Thyroid gland (tissue), 4 donors: ENCODE measurements at regions of chr7 and their contacts with region 1.

Region 1: DNA sequence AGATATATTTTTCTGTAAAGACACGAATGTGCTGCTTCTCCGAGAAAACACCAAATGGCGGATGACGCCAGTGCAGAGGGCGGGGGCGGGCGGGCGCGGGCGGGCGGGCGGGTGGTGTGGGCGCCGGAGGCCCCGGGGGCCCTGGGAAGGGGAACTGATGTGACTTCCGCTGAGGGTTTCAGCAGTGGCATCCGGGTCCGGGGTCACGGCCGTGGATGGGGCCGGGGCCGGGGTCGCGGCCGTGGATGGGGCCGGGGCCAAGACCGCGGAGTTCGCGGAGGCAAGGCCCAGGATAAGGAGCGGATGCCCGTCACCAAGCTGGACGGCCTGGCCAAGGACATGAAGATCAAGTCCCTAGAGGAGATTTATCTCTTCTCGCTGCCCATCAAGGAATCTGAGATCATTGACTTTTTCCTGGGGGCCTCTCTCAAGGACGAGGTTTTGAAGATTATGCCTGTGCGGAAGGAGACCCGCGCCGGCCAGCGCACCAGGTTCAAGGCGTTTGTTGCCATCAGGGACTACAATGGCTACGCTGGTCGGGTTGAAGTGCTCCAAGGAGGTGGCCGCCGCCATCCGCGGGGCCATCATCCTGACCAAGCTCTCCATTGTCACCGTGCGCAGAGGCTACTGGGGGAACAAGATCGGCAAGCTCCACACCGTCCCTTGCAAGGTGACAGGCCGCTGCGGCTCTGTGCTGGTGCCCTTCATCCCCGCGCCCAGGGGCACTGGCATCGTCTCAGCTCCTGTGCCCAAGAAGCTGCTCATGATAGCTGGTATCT is 20.3 kb upstream of the IGF2BP3 start:
- DNase-seq: peak; percentile 38 to 39
- H3K4me3 ChIP-seq: peak overlapping the region in 2 of 3 donors; percentile 36 to 39
- H3K27ac ChIP-seq: no peak overlapping the region
- H3K4me1 ChIP-seq: no peaks in the 10 kb centered on the region
- H3K27me3 ChIP-seq: no peaks in the 10 kb centered on the region
- CTCF ChIP-seq: no peak
- POLR2A ChIP-seq: no peak

Region 2: DNA sequence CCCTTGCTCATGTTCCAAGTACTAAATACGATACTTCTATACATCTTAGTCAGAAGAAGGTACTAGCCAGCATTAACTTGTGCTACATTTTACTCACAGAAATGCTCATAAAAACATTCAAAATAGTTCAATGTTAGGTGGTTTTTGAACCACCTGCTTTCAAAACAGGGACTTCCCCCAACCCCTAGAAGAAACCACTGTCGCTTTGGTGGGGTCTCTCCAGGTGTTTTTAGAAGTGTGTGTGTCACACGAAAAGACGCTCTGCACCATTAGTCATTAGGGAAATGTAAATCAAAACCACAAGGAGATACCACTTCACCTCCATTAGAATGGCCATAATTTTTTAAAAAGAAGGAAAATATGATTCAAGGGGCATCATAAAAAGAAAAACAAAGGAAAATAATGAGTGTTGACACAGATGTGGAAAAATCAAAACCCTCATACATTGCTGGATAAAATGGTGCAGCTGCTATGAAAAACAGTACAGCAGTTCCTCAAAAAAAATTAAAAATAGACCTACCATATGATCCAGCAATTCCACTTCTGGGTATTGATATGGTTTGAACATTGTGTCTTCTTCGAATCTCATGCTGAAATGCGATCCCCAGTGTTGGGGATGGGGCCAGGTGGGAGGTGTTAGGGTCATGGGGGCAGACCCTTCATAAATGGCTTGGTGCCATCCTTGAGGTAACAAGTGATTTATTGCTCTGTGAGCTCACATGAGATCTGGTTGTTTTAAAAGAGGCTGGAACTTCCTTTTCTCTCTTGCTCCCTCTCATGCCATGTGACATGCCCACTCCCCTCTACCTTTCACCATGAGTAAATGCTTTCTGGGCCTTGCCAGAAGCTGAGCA is 117.2 kb before region 1 on chr7:
- intact Hi-C with region 1: no loop called
- DNase-seq: no peak
- H3K4me3 ChIP-seq: no peak overlapping the region
- H3K27ac ChIP-seq: no peak overlapping the region
- H3K4me1 ChIP-seq: no peaks in the 10 kb centered on the region
- H3K27me3 ChIP-seq: no peaks in the 10 kb centered on the region
- CTCF ChIP-seq: no peak
- POLR2A ChIP-seq: no peak

Region 3: DNA sequence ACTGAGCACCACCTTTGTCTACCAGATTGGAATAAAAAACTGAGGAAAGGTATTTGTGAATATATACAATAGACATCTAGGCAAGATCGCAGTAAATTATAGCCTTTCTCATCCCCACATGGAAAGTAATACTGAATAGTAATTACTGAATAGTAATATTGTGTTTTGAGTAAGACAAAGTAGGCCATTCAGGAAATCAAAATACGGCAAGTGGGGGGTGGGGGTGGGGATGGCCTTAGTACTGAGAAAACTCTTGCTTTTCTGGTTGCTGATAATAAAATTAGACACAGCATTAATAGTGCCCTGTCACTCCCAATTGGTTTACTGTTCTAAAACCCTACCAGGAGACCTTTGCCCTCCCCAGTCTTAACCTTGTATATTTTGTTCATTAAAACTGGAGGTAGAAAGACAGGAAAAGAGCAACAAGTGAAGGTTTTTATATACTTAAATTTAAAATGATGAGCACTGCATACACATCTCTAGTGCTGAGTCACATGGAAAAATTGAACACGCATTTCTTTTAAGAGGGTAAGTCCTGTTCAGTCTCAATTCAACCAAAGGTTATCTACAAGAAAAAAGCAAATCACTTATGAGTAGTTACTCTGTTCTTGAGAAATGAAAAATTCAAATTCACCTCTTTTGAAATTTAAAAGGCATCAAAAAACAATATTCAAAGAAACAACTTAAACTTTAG is 85.9 kb before region 1 on chr7:
- intact Hi-C with region 1: no loop called
- DNase-seq: no peak
- H3K4me3 ChIP-seq: no peak overlapping the region
- H3K27ac ChIP-seq: no peak overlapping the region
- H3K4me1 ChIP-seq: no peaks in the 10 kb centered on the region
- H3K27me3 ChIP-seq: no peaks in the 10 kb centered on the region
- CTCF ChIP-seq: no peak
- POLR2A ChIP-seq: no peak

Region 4: DNA sequence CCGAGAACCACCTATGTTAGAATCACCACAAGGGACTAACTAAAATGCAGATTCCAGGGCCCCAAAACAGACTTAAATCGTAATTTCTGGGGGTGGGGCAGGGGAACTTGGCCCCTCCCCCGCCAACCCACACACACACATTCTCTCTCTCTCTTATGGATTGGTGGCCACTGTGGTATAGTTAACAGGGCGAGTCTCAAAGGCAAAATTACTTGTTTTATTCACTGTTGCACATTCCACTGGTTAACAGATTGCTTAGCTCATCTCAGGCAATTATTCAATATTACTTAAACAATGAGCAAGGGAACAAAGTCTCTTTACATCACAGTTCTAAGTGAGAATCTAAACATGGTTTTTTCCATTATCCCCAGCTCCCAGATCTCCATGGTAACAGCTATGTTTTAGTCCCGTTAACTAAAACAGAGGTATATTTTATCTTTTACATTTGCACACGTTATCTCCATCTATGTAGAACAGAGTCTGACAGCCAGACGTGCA is 58.8 kb before region 1 on chr7:
- intact Hi-C with region 1: loop called (anchors 10 kb)
- DNase-seq: no peak
- H3K4me3 ChIP-seq: no peak overlapping the region
- H3K27ac ChIP-seq: no peak overlapping the region
- H3K4me1 ChIP-seq: no peaks in the 10 kb centered on the region
- H3K27me3 ChIP-seq: no peaks in the 10 kb centered on the region
- CTCF ChIP-seq: no peak
- POLR2A ChIP-seq: no peak

Region 5: DNA sequence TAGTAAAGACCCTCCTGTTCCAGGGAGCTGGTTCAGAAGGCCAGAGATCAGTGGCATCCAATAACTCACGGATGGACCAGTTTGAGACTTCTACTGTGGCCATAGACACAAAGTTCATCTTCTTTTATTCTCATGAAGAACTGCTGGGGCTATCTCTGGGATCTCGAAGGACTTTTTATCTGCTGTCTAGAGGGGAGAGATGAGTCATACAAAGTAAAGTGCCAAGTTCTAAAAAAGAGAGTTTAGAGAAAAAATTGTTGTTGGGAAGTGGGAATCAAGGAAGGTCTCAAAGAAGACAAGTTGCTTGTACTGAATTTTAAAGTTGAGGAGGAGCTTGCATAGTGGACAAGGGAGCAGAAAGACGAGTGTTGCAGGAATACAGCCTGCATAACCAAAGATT is 181.5 kb after region 1 on chr7:
- intact Hi-C with region 1: no loop called
- DNase-seq: no peak
- H3K4me3 ChIP-seq: no peak overlapping the region
- H3K27ac ChIP-seq: no peak overlapping the region
- H3K4me1 ChIP-seq: no peaks in the 10 kb centered on the region
- H3K27me3 ChIP-seq: no peaks in the 10 kb centered on the region
- CTCF ChIP-seq: no peak
- POLR2A ChIP-seq: no peak